CD14-positive monocyte (primary cell): ENCODE measurements at regions of chr22 and their contacts with region 1.

Region 1: GRCh38 chr22:36404446-36404845 is 16.7 kb upstream of the MYH9 start:
- DNase-seq: no peak
- H3K4me3 ChIP-seq: peak overlapping the region in 1 of 3 experiments; percentile 63
- H3K4me3 Mint-ChIP-seq: no peak overlapping the region
- H3K27ac ChIP-seq: peak overlapping the region; percentile 87 to 90
- H3K27ac Mint-ChIP-seq: peak overlapping the region; percentile 97 to 100 (median 99)
- H3K4me1 ChIP-seq: peaks cover 86 to 93% of the 10 kb centered on the region in 2 donors
- H3K4me1 Mint-ChIP-seq: peaks cover 81% of the 10 kb centered on the region
- H3K27me3 ChIP-seq: no peaks in the 10 kb centered on the region
- H3K27me3 Mint-ChIP-seq: peaks cover 0 to 2% (median 0%) of the 10 kb centered on the region in 3 donors
- CTCF ChIP-seq: no peak

Region 2: DNA sequence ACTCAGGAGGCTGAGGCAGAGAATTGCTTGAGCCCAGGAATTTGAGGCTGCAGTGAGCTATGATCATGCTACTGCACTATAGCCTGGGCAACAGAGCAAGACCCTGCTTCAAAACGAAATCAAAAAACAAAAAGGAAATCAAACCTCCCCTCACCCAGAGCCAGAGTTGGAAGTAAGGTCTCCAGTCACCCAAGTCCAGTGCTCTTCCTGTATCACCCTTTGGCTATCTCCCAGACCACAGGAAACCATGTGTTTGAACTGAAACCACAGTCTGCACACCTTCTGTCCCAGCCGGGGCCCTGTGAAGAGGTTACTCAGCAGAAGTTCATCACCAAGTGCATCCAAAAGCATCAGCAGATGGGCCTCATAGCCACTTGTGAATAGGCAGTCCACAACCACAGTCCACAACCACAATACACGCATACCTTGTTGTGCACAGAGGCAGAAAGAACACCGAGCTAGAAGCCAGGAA is 21.3 kb before region 1 on chr22:
- intact Hi-C with region 1: no loop called
- DNase-seq: no peak
- H3K4me3 ChIP-seq: peak overlapping the region in 1 of 3 experiments; percentile 38
- H3K4me3 Mint-ChIP-seq: peak overlapping the region in 1 of 2 donors; percentile 67
- H3K27ac ChIP-seq: peak overlapping the region in 1 of 2 donors; percentile 64
- H3K27ac Mint-ChIP-seq: peak overlapping the region; percentile 57 to 88 (median 66)
- H3K4me1 ChIP-seq: peaks cover 63 to 74% of the 10 kb centered on the region in 2 donors
- H3K4me1 Mint-ChIP-seq: peaks cover 72% of the 10 kb centered on the region
- H3K27me3 ChIP-seq: no peaks in the 10 kb centered on the region
- H3K27me3 Mint-ChIP-seq: peaks cover 0 to 2% (median 0%) of the 10 kb centered on the region in 3 donors
- CTCF ChIP-seq: no peak

Region 3: GRCh38 chr22:36439481-36440271 is 35.2 kb after region 1 on chr22:
- intact Hi-C with region 1: loop called in 1 of 2 experiments (anchors 5 kb)
- DNase-seq: peak in 1 of 3 donors; percentile 71
- H3K4me3 ChIP-seq: no peak overlapping the region
- H3K4me3 Mint-ChIP-seq: no peak overlapping the region
- H3K27ac ChIP-seq: no peak overlapping the region
- H3K27ac Mint-ChIP-seq: peak overlapping the region in 1 of 7 donors; percentile 19
- H3K4me1 ChIP-seq: peaks cover 37 to 52% of the 10 kb centered on the region in 2 donors
- H3K4me1 Mint-ChIP-seq: peaks cover 47% of the 10 kb centered on the region
- H3K27me3 ChIP-seq: no peaks in the 10 kb centered on the region
- H3K27me3 Mint-ChIP-seq: peaks cover 0 to 5% (median 5%) of the 10 kb centered on the region in 3 donors
- CTCF ChIP-seq: no peak

Region 4: DNA sequence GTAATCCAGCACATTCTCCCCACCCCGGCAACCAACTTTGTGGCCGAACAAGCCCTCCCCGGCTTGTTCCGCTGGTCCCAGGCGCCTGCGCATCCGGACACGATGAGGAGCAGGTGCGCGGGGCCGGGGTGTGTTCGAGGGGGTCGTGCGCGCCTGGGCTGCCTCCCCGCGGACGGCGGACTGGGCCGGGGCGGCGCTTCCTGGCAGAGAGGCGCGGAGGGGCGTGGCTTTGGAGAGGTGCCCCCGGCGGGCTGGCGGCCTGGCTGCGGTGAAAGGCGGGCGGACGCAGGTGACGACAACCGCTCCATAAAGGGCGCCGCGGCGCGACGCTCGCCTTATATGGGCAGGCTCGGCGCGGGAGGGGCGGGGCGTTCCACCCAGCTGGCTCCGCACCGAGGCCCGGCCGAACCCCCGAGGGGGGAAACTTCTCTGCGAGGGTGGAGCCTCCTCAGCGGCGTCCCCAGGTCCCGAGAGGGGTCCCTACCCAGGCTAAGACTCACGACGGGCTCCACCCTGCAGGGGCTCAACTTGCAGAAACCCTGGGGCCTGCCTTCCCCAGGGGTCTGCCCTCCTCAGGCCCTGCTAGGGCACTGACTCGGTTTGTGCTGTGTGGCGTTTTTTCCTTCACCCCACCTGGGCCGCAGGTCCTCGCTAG is 50.6 kb after region 1 on chr22:
- intact Hi-C with region 1: no loop called
- DNase-seq: peak; percentile 63 to 84 (median 77)
- H3K4me3 ChIP-seq: peak overlapping the region; percentile 28 to 85 (median 48)
- H3K4me3 Mint-ChIP-seq: peak overlapping the region; percentile 70 to 71
- H3K27ac ChIP-seq: peak overlapping the region; percentile 37 to 67
- H3K27ac Mint-ChIP-seq: peak overlapping the region; percentile 18 to 90 (median 76)
- H3K4me1 ChIP-seq: peaks cover 67 to 75% of the 10 kb centered on the region in 2 donors
- H3K4me1 Mint-ChIP-seq: peaks cover 58% of the 10 kb centered on the region
- H3K27me3 ChIP-seq: no peaks in the 10 kb centered on the region
- H3K27me3 Mint-ChIP-seq: peaks cover 0 to 2% (median under 1%) of the 10 kb centered on the region in 3 donors
- CTCF ChIP-seq: no peak

Region 5: GRCh38 chr22:36659762-36660509 is 255.5 kb after region 1 on chr22:
- intact Hi-C with region 1: no loop called
- DNase-seq: peak; percentile 70 to 87 (median 73)
- H3K4me3 ChIP-seq: peak overlapping the region in 1 of 3 experiments; percentile 54
- H3K4me3 Mint-ChIP-seq: peak overlapping the region in 1 of 2 donors; percentile 76
- H3K27ac ChIP-seq: peak overlapping the region; percentile 17 to 63
- H3K27ac Mint-ChIP-seq: peak overlapping the region in 4 of 7 donors; percentile 22 to 56 (median 35)
- H3K4me1 ChIP-seq: peaks cover 16 to 20% of the 10 kb centered on the region in 2 donors
- H3K4me1 Mint-ChIP-seq: peaks cover 20% of the 10 kb centered on the region
- H3K27me3 ChIP-seq: peaks cover 0 to 2% of the 10 kb centered on the region in 2 donors
- H3K27me3 Mint-ChIP-seq: peaks cover 9 to 12% (median 12%) of the 10 kb centered on the region in 3 donors
- CTCF ChIP-seq: no peak